Tibial artery (tissue), 4 donors: ENCODE measurements at regions of chr12 and their contacts with region 1.

Region 1: GRCh38 chr12:64019118-64019517 is 174.6 kb downstream of the SRGAP1 start:
- DNase-seq: no peak
- H3K4me3 ChIP-seq: no peak overlapping the region
- H3K27ac ChIP-seq: no peak overlapping the region
- H3K4me1 ChIP-seq: no peaks in the 10 kb centered on the region
- H3K27me3 ChIP-seq: no peaks in the 10 kb centered on the region
- CTCF ChIP-seq: no peak

Region 2: DNA sequence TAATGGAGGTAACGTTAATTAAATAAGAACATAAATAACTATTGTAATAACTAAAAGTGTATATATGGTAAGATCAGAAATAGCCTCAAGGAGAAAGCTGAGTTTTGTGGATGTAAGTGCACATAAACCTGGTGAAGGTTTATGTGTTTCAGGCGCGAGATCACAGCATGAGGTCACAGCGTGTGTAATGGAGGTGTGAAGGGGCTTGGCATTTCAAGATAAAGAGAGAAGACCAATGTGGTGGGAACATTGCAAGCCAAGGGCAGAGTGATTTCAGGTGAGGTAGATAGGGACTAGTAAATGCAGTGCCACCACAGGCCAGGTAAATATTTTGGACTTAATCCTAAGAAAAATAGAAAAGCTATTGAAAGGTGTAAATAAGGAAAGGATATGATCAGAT is 224.7 kb after region 1 on chr12:
- intact Hi-C with region 1: no loop called
- DNase-seq: no peak
- H3K4me3 ChIP-seq: no peak overlapping the region
- H3K27ac ChIP-seq: no peak overlapping the region
- H3K4me1 ChIP-seq: no peaks in the 10 kb centered on the region
- H3K27me3 ChIP-seq: no peaks in the 10 kb centered on the region
- CTCF ChIP-seq: no peak

Region 3: GRCh38 chr12:64744422-64745258 is 725.5 kb after region 1 on chr12:
- intact Hi-C with region 1: loop called (anchors 5 kb)
- DNase-seq: no peak
- H3K4me3 ChIP-seq: no peak overlapping the region
- H3K27ac ChIP-seq: peak overlapping the region in 1 of 2 donors; percentile 17
- H3K4me1 ChIP-seq: peaks cover 0 to 12% (median 5%) of the 10 kb centered on the region in 4 donors
- H3K27me3 ChIP-seq: no peaks in the 10 kb centered on the region
- CTCF ChIP-seq: no peak